Psoas muscle (tissue), 8 donors: ENCODE measurements at regions of chr6 and their contacts with region 1.

Region 1: DNA sequence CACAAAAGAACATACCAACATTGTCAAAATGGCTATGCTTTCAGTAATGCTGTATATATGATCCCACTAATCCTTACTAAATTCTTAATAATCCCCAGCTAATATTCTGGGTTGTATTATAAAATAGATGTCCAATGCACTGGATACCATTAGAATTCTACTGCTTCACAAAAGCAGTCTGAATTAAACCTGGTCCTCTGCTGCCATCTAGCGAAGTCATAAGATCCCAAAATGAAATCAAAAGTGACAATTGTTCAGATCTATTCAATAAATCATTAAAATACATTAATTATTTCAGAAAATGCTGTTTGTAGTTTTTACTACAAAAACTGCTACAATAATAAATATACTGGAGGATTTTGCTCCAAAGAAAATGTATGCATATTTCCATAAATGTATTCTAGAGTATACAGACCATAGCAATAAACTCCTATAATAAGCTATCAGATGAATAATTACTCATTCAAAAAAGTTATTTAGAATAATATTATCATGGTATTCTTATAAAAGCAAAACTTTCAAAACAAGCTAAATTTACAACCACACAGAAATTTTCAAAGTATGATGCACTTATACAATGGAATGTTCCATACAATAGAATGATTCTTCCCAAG is 92.6 kb downstream of the RNGTT start:
- DNase-seq: no peak
- ATAC-seq: peak in 3 of 4 donors; percentile 54 to 85 (median 62)
- H3K4me3 ChIP-seq: no peak overlapping the region
- H3K27ac ChIP-seq: no peak overlapping the region
- H3K4me1 ChIP-seq: peaks cover 18% of the 10 kb centered on the region
- H3K27me3 ChIP-seq: no peaks in the 10 kb centered on the region
- CTCF ChIP-seq: peak; percentile 80

Region 2: DNA sequence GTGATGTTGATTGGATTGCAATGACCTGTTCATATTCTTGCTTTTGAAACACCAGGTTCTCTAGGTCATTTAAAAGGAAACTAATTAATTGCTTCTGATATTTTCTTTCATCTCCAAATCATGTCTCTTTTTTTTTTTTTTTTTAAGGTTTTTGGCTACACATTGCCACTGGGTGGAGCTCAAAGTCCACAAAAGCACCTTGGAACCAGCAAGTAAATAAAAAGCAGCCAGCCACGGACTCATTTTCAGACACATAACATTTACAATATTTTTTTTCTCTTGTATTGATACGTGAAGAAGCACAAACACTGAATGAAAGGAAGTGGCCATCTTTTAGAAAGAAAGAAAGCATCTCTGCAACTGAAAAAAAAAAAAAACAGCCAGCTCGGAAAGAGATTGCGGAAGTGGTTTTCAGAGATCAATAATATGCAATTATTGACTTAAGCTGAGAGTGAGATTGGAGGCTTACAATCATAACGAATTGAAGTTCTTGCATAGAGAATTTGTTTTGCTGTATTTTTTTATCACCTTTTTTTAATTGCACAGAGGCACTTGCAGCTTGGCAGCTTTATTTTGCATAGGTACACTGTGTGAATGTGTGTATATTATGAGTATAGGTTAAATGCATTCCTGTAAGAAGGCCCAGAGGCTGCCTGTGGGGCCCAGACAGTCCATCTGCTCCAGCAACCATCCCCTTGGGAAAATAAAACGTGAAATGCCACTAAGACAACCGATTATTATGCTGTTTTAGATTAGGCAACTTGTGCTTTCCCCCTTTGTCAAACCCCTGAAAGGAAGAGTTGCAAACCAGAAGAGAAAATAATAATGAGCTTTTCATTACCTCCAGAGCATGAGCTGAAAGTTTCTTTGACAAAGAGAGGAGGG is 1804.1 kb before region 1 on chr6:
- intact Hi-C with region 1: loop called in 1 of 2 experiments (anchors 10 kb)
- DNase-seq: no peak
- ATAC-seq: no peak
- H3K4me3 ChIP-seq: no peak overlapping the region
- H3K27ac ChIP-seq: no peak overlapping the region
- H3K4me1 ChIP-seq: no peaks in the 10 kb centered on the region
- H3K27me3 ChIP-seq: peaks cover 0 to 3% (median 3%) of the 10 kb centered on the region in 3 donors
- CTCF ChIP-seq: peak; percentile 37

Region 3: GRCh38 chr6:87393022-87393622 is 1477.7 kb before region 1 on chr6:
- intact Hi-C with region 1: loop called in 1 of 2 experiments (anchors 5 kb)
- DNase-seq: no peak
- ATAC-seq: peak; percentile 66 to 88 (median 85)
- H3K4me3 ChIP-seq: no peak overlapping the region
- H3K27ac ChIP-seq: no peak overlapping the region
- H3K4me1 ChIP-seq: no peaks in the 10 kb centered on the region
- H3K27me3 ChIP-seq: no peaks in the 10 kb centered on the region
- CTCF ChIP-seq: peak; percentile 79

Region 4: DNA sequence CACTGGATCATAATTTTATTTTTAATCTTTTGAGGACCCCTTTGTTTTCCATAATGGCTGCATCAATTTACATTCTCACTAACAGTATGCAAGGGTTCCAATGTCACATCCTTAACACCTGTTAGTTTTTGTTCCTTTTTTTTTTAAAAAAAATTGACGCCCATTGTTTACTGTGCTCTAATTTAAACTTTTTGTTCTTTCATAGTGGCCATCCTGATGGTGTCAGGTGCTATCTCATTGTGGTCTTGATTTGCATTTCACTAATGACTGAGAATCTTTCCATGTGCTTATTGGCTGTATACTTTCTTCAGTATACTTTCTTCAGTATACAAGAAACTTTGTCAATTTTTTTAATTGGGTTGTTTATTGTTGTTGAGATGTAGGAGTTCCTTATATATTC is 254.4 kb before region 1 on chr6:
- intact Hi-C with region 1: no loop called
- DNase-seq: no peak
- ATAC-seq: no peak
- H3K4me3 ChIP-seq: no peak overlapping the region
- H3K27ac ChIP-seq: no peak overlapping the region
- H3K4me1 ChIP-seq: no peaks in the 10 kb centered on the region
- H3K27me3 ChIP-seq: no peaks in the 10 kb centered on the region
- CTCF ChIP-seq: no peak

Region 5: DNA sequence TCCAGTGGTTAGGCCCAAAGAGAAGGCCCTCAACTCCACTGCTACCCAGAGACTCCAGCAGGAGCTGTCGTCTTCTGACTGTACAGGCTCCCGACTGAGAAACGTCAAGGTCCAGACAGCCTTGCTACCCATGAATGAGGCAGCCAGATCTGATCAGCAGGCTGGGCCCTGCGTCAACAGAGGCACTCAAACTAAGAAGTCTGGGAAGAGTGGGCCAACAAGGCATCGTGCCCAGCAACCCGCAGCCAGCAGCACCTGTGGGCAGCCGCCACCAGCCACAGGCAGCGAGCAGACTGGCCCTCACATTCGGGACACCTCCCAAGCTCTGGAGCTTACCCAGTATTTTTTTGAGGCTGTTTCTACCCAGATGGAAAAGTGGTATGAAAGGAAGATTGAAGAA is 759.7 kb after region 1 on chr6:
- intact Hi-C with region 1: no loop called
- DNase-seq: no peak
- ATAC-seq: peak; percentile 46 to 72 (median 68)
- H3K4me3 ChIP-seq: no peak overlapping the region
- H3K27ac ChIP-seq: no peak overlapping the region
- H3K4me1 ChIP-seq: no peaks in the 10 kb centered on the region
- H3K27me3 ChIP-seq: no peaks in the 10 kb centered on the region
- CTCF ChIP-seq: no peak